Naive thymus-derived CD4-positive, alpha-beta T cell (primary cell): ENCODE measurements at regions of chr11 and their contacts with region 1.

Region 1: DNA sequence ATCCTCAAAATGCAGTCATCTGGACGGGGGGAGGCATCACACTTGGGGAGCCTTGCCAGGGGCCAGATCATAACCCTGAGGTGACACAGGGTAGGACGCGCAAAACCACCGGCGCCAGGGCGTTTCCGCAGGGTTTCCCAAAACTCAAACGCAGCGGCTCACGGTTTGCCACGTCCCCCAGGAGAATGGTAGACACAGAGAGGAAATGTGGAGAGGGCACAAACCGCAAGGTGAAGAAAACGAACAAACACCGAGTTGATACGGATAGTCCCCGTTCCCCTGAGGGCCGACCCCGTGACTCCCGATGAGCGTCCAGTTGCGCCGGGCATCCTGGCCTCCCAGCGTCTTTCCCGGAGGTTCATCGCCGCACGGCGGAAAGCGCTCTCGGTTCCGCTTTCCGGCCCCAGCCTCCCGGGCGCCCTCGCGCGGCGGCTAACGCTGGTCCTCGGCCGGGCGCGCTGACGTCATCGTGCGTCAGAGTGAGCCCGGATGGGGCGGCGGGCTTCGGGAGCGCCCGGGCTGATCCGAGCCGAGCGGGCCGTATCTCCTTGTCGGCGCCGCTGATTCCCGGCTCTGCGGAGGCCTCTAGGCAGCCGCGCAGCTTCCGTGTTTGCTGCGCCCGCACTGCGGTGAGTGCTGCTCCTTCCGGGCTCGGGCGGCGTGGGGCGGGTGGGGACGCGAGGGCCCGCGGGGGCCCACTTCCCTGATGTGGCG is at the start of gene BIRC2:
- DNase-seq: peak; percentile 93 to 98 (median 95)
- ATAC-seq: peak; percentile 91
- H3K4me3 ChIP-seq: peak within 1 kb of the TSS; percentile 96
- H3K4me3 Mint-ChIP-seq: peak within 1 kb of the TSS; percentile 81 to 98 (median 96)
- H3K27ac ChIP-seq: peak within 1 kb of the TSS; percentile 99
- H3K27ac Mint-ChIP-seq: peak within 1 kb of the TSS; percentile 97 to 100 (median 99)
- H3K4me1 ChIP-seq: peaks cover 17% of the 10 kb centered on the region in 2 donors
- H3K4me1 Mint-ChIP-seq: peaks cover 29 to 48% (median 44%) of the 10 kb centered on the region in 7 donors
- H3K27me3 ChIP-seq: no peaks in the 10 kb centered on the region
- H3K27me3 Mint-ChIP-seq: no peaks in the 10 kb centered on the region
- total RNA-seq, gene BIRC2: 37.5 to 103 (median 72.0) TPM

Region 2: DNA sequence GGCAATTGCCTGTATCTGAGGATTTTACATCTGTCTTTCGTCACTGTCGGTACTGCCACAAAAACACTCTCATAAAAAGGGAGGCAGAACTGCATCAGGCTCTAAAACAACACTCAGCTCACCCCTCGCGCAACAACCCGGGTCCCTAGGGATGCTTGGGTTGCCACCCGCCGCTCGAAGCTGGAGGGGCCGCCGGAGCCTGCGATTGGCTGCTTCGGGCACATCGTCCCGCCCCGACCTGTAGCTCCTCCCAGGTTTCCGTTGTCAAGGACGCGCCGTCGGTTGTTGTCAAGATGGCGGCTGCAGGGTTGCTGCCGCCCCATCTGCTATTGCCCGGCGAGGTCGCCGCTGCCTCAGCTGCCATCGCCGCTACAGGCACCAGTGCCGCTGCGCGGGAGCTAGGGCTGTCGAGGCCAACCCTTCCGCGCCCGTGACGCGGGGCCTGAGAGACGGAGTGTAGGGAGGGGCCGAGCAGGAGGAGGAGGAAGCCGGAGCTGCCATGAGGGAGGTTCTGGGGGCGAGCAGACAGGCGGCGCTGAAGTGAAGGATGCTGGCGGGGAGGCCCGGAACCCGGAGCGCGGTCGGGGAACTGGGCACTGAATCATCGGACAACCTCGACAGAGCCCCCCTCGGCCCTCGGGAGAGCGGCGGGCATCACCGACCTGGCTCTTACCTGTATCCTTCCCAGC is 432.0 kb before region 1 on chr11 and contains the start of gene CEP126:
- CTCF ChIA-PET with region 1: no interaction called
- POLR2A ChIA-PET with region 1: no interaction called
- intact Hi-C with region 1: loop called in 1 of 2 experiments (anchors 5 kb)
- DNase-seq: peak; percentile 89 to 96 (median 92)
- ATAC-seq: peak; percentile 93
- H3K4me3 ChIP-seq: peak within 1 kb of the TSS; percentile 78
- H3K4me3 Mint-ChIP-seq: peak within 1 kb of the TSS; percentile 90 to 97 (median 94)
- H3K27ac ChIP-seq: peak within 1 kb of the TSS; percentile 68
- H3K27ac Mint-ChIP-seq: peak within 1 kb of the TSS; percentile 79 to 95 (median 89)
- H3K4me1 ChIP-seq: peaks cover 10 to 13% of the 10 kb centered on the region in 2 donors
- H3K4me1 Mint-ChIP-seq: peaks cover 18 to 30% (median 26%) of the 10 kb centered on the region in 7 donors
- H3K27me3 ChIP-seq: no peaks in the 10 kb centered on the region
- H3K27me3 Mint-ChIP-seq: peaks cover 0 to 6% (median 0%) of the 10 kb centered on the region in 5 donors
- total RNA-seq, gene CEP126: 0.39 to 3.4 (median 2.6) TPM

Region 3: DNA sequence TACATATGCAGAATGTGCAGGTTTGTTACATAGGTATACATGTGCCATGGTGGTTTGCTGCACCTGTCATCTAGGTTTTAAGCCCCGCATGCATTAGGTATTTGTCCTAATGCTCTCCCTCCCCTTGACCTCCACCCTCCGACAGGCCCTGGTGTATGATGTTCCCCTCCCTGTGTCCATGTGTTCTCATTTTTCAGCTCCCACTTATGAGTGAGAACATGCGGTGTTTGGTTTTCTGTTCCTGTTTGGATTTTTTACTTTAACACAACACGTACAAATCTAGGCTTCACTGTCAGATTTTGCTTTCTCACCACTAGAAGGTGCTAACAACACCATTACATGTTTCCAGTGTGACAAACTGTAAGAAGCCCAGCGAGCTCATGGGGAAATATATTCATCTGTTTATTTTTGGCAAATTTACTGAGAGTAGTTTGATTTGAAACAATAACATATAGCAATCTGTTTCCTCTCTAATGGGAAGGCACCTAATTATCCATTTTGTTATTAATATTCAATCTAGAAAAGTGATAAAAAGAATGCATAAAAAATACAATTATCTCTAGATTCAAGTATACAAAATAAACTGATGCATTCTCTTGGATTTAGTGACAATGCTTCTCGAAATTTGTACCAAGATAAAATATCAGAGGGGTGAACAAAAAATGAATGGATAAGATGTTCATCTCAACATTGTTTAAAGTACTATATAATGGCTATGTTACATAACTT is 52.9 kb before region 1 on chr11:
- CTCF ChIA-PET with region 1: interaction called, 52 read pairs
- POLR2A ChIA-PET with region 1: interaction called, 12 read pairs
- intact Hi-C with region 1: loop called (anchors 1 kb)
- DNase-seq: peak in 7 of 9 donors; percentile 50 to 75 (median 66)
- ATAC-seq: peak; percentile 98
- H3K4me3 ChIP-seq: peak overlapping the region; percentile 49
- H3K4me3 Mint-ChIP-seq: peak overlapping the region; percentile 62 to 97 (median 82)
- H3K27ac ChIP-seq: peak overlapping the region; percentile 49
- H3K27ac Mint-ChIP-seq: peak overlapping the region; percentile 77 to 95 (median 91)
- H3K4me1 ChIP-seq: peaks cover 7 to 9% of the 10 kb centered on the region in 2 donors
- H3K4me1 Mint-ChIP-seq: peaks cover 10 to 44% (median 40%) of the 10 kb centered on the region in 7 donors
- H3K27me3 ChIP-seq: no peaks in the 10 kb centered on the region
- H3K27me3 Mint-ChIP-seq: no peaks in the 10 kb centered on the region

Region 4: DNA sequence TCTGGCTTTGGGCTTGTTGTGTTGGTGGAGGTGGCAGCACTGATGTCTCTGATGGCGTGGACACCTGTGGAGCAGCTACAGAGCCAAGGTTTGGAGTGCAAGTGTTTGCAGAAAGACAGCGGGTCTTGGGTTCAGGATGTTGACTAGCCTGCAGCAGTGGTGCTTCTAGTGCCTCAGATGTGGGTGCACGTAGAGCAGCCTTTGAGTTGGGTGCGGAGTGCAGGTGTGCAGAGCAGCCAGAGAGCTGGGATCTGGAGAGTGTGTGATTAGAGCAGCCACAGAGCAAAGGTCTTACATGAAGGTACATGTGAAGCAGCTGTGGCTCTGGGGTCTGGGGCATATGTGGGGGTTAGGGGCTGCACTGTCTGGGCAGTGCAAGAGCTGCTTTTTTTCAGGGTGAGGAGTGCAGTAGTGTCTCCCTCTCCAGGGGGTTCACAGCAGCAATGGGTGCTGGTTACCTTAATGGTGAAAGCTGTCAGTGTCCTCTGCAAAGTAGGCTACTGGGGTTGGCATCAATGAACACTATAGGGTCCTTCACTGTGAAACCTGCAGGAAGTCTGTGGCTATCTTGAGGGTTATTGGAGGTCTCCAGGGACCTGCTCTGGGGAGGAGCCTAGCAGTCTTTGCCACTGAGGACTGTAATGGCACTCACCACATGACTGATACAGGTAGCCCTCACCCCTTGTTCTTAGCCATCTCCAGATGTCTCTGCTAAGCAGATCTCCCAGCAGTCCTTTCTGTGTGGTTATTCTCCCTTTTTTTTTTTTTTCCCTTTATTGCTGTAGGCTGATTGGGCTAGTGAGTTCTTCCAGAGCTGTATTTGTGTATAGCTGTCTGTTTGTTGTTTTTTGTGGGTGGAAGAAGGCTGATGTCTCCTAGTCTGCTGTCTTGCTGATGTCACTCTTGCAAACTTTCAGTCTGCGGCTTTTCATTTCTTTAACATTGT is 14.5 kb after region 1 on chr11:
- CTCF ChIA-PET with region 1: interaction called, 16 read pairs
- POLR2A ChIA-PET with region 1: interaction called, 55 read pairs
- intact Hi-C with region 1: loop called (anchors 1 kb)
- DNase-seq: peak in 8 of 9 donors; percentile 11 to 82 (median 76)
- ATAC-seq: peak; percentile 83
- H3K4me3 ChIP-seq: peak overlapping the region; percentile 42
- H3K4me3 Mint-ChIP-seq: peak overlapping the region; percentile 72 to 87 (median 77)
- H3K27ac ChIP-seq: peak overlapping the region; percentile 80
- H3K27ac Mint-ChIP-seq: peak overlapping the region; percentile 86 to 99 (median 97)
- H3K4me1 ChIP-seq: peaks cover 15 to 29% of the 10 kb centered on the region in 2 donors
- H3K4me1 Mint-ChIP-seq: peaks cover 27 to 71% (median 50%) of the 10 kb centered on the region in 7 donors
- H3K27me3 ChIP-seq: no peaks in the 10 kb centered on the region
- H3K27me3 Mint-ChIP-seq: no peaks in the 10 kb centered on the region

Region 5: GRCh38 chr11:102420547-102420946 is 73.6 kb after region 1 on chr11:
- CTCF ChIA-PET with region 1: interaction called, 3 read pairs
- POLR2A ChIA-PET with region 1: no interaction called
- intact Hi-C with region 1: loop called in 1 of 2 experiments (anchors 2 kb)
- DNase-seq: no peak
- ATAC-seq: no peak
- H3K4me3 ChIP-seq: no peak overlapping the region
- H3K4me3 Mint-ChIP-seq: peak overlapping the region in 6 of 10 donors; percentile 6 to 65 (median 35)
- H3K27ac ChIP-seq: peak overlapping the region; percentile 12
- H3K27ac Mint-ChIP-seq: peak overlapping the region in 8 of 9 donors; percentile 48 to 97 (median 88)
- H3K4me1 ChIP-seq: peaks cover 13 to 71% of the 10 kb centered on the region in 2 donors
- H3K4me1 Mint-ChIP-seq: peaks cover 65 to 100% (median 95%) of the 10 kb centered on the region in 7 donors
- H3K27me3 ChIP-seq: no peaks in the 10 kb centered on the region
- H3K27me3 Mint-ChIP-seq: no peaks in the 10 kb centered on the region

Region 6: GRCh38 chr11:102882389-102883024 is 535.6 kb after region 1 on chr11:
- CTCF ChIA-PET with region 1: no interaction called
- POLR2A ChIA-PET with region 1: no interaction called
- intact Hi-C with region 1: no loop called
- DNase-seq: no peak
- ATAC-seq: no peak
- H3K4me3 ChIP-seq: no peak overlapping the region
- H3K4me3 Mint-ChIP-seq: no peak overlapping the region
- H3K27ac ChIP-seq: no peak overlapping the region
- H3K27ac Mint-ChIP-seq: peak overlapping the region in 1 of 9 donors; percentile 44
- H3K4me1 ChIP-seq: no peaks in the 10 kb centered on the region
- H3K4me1 Mint-ChIP-seq: peaks cover 0 to 3% (median 0%) of the 10 kb centered on the region in 7 donors
- H3K27me3 ChIP-seq: no peaks in the 10 kb centered on the region
- H3K27me3 Mint-ChIP-seq: peaks cover 2 to 18% (median 9%) of the 10 kb centered on the region in 5 donors

Region 7: DNA sequence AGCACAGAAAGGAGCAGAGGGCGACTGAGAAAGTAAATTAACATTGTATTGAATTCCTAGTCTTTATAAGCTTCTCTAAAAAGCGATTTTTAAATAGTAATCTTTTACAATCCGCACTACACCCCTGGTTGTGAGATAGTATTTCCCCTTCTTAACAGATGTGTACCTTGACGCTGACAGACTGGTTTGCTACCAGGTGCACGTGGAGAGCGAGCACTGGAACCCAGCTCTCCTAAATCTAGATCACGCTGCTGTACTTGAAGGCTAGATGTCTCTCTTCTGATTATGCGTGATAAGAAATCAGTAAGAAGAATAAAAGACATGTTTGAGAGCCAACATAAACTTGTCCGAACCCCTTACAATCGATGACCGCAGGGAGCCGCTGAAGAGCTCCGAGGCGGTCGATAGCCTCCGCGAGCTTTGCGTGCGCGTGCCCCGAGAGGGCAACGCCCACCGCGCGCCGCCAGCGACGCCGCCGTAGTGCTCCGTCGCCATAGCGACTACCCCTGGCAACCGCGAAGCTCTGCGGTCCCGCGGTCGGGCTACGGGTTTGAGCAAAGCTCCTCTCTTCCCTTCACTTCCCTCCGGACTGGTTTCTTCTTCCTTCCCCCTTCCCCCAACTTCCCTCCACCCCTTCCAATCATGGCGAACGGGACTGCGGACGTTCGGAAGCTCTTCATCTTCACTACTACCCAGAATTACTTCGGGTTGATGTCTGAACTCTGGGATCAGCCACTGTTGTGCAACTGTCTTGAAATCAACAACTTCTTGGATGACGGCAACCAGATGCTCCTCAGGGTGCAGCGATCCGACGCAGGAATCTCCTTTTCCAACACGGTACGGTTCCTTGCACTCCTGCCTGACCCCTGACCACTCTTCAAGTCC is 762.3 kb after region 1 on chr11 and contains the start of gene DYNC2H1:
- CTCF ChIA-PET with region 1: no interaction called
- POLR2A ChIA-PET with region 1: no interaction called
- intact Hi-C with region 1: loop called in 1 of 2 experiments (anchors 1 kb)
- DNase-seq: peak; percentile 78 to 91 (median 89)
- ATAC-seq: peak; percentile 99
- H3K4me3 ChIP-seq: peak within 1 kb of the TSS; percentile 93
- H3K4me3 Mint-ChIP-seq: peak within 1 kb of the TSS; percentile 87 to 99 (median 94)
- H3K27ac ChIP-seq: peak within 1 kb of the TSS; percentile 60
- H3K27ac Mint-ChIP-seq: peak within 1 kb of the TSS; percentile 87 to 99 (median 92)
- H3K4me1 ChIP-seq: peaks cover 4 to 6% of the 10 kb centered on the region in 2 donors
- H3K4me1 Mint-ChIP-seq: peaks cover 5 to 19% (median 13%) of the 10 kb centered on the region in 7 donors
- H3K27me3 ChIP-seq: no peaks in the 10 kb centered on the region
- H3K27me3 Mint-ChIP-seq: peaks cover 6 to 42% (median 7%) of the 10 kb centered on the region in 5 donors
- total RNA-seq, gene DYNC2H1: 1.5 to 4.2 (median 3.0) TPM